ENCODE measurements at regions of chr3 and their contacts with region 1.

Region 1: DNA sequence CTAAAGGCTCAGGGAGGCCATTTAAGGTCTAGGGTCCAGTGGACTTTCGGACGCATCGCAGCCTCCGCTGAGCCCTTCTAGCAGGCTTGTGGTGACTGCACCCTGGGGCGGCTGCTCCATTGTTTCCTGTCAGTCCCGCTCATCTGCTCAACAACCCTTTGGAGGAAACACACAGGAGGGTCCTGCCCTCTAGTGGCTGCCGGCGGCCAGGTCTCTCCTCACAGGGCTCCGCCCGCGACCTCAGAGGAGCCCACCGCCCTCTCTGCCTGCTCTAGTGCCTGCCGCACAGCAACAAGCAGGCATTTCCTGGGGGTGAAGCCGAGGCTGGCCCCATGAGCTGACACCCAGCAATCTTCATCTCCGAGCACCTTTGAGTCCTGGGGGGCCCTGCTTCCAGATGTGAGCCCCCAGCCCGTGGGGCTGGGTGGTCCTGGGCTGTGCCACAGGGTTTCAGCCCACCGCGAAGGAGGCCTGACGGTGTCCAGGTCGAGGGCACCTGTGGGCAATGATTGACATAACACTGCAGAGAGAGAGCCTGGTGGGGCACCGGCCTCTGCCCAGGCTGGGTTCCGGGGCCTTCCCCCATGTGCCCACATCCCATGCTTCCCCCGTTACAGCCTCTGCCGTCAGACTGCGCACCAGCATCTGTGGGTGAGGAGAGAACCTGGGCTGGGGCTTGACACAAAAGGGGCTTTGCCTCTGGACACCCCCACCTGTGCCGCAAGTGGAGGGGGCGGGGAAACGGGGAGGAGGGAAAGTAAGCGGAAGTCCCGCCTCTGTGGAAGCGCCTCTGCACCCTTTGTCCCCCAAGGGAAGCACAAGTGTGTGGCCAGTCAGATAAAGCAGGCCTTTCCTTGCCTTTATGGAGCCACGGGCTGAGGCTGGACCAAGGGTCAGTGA is 27.0 kb upstream of the SFMBT1 start:
- DNase-seq: peak; percentile 87
- H3K4me3 ChIP-seq: peak overlapping the region; percentile 51 to 67 (median 64)
- H3K27ac ChIP-seq: peak overlapping the region; percentile 61 to 75 (median 69)
- H3K4me1 ChIP-seq: peaks cover 4 to 14% (median 12%) of the 10 kb centered on the region in 4 donors
- H3K27me3 ChIP-seq: no peaks in the 10 kb centered on the region
- CTCF ChIP-seq: peak; percentile 82 to 97 (median 92)
- EP300 ChIP-seq: no peak
- POLR2A ChIP-seq: no peak

Region 2: DNA sequence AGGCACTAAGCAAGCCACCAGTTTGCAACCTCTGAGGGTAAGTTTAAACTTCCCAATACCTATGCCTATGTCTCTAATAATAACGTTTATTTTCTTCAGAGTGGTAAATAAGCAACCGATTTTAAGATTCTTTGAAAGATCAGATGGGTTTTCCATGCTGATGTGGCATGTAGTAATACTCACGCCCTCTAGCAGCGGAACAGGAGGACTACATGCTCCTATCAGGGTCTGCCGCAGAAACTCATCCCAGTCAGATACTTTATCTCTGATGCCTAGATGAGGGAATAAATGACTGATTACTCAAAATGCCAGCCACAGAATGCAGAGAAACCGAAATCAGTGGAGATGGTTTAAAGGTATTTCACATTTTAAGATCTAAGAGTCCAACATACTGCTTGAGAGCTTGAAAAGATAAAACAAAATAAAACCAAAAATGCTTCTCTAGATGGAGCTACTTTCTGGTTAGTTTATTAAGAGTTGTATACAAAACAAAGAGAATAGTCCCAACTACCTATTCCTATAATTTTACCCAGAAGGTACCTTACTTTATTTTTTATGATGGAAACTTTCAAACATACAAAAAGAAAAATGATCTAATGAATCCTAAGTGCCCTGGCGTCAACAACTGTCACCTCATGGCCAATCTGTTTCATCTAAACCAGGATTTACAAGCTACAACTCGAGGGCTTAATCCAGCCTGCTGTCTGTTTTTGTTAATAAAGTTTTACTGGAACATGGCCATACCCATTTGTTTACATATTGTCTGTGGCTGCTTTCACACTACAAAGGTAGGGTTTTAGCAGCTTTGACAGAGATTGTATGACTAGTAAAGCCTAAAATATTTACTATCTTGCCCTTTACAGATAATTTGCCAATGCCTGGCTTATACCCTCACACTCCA is 138.0 kb before region 1 on chr3:
- intact Hi-C with region 1: loop called (anchors 5 kb)
- DNase-seq: no peak
- H3K4me3 ChIP-seq: no peak overlapping the region
- H3K27ac ChIP-seq: no peak overlapping the region
- H3K4me1 ChIP-seq: peaks cover 0 to 10% (median 0%) of the 10 kb centered on the region in 4 donors
- H3K27me3 ChIP-seq: no peaks in the 10 kb centered on the region
- CTCF ChIP-seq: peak; percentile 39 to 69 (median 52)
- EP300 ChIP-seq: no peak
- POLR2A ChIP-seq: no peak

Region 3: DNA sequence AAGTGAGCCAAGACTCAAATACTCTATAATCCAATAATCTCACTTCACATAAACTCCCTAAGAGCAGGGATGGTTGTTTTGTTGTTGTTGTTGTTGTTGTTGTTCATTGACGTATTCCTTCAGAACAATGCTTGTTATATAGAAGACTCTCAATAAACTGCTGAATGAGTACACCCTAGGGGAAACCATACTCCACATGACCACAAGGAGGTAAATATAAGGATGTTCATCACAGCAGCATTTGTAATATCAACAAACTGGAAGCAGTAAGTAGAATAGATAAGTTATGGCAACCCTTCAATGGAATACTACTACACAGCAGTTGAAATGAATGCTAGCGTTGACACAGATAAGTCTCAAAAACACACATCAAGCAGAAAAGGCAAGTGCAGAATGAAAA is 113.1 kb before region 1 on chr3:
- intact Hi-C with region 1: no loop called
- DNase-seq: no peak
- H3K4me3 ChIP-seq: no peak overlapping the region
- H3K27ac ChIP-seq: no peak overlapping the region
- H3K4me1 ChIP-seq: no peaks in the 10 kb centered on the region
- H3K27me3 ChIP-seq: no peaks in the 10 kb centered on the region
- CTCF ChIP-seq: no peak
- EP300 ChIP-seq: no peak
- POLR2A ChIP-seq: no peak

Measured in sigmoid colon (tissue), 7 donors.